ENCODE measurements at regions of chr4 and their contacts with region 1.

Region 1: DNA sequence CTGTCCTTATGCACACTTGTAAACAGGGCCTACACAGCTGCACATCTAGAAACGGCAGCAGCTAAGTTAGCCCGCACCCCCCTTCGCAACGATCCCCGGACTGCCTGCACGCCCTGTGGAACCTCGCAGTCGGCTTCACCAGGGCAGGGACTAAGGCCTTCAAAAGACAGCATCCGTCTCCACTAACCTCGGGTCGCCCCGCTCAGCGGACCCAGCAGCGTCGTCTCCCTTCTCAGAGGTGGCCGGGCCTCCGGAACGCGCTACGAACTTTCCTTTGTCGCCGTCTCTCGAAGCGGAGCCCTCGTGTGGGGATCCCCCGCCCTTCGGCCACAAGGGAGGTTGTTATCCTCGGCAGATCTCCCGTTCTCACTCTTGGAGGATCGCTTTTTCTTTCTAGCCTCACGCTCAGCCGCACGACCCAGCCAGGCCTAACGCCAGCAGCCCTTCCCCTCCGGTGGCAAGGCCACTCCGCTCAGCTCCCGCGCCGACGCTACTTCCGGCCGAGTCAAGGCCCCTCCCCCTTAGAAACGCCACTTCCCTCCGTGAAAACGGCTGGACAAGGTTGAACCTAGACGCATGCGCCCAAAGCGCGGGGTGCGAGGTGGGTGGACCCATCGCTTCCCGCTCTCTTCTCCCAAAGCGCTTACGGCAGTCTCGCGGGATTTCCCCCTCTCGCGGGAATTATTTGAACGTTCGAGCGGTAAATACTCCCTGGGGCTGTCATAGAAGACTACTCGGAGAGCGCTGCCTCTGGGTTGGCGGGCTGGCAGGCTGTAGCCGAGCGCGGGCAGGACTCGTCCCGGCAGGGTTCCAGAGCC is at the starts of genes DCAF16 and NCAPG:
- DNase-seq: peak; percentile 100
- H3K4me3 ChIP-seq: peak within 1 kb of the TSS; percentile 74 to 97 (median 86)
- H3K27ac ChIP-seq: peak within 1 kb of the TSS; percentile 68
- H3K4me1 ChIP-seq: peaks cover 45% of the 10 kb centered on the region
- H3K27me3 ChIP-seq: no peaks in the 10 kb centered on the region
- CTCF ChIP-seq: no peak
- POLR2A ChIP-seq: peak; percentile 94
- total RNA-seq, gene DCAF16: 29.0 and 35.0 TPM in 2 replicates
- total RNA-seq, gene NCAPG: 63.4 and 66.4 TPM in 2 replicates

Region 2: DNA sequence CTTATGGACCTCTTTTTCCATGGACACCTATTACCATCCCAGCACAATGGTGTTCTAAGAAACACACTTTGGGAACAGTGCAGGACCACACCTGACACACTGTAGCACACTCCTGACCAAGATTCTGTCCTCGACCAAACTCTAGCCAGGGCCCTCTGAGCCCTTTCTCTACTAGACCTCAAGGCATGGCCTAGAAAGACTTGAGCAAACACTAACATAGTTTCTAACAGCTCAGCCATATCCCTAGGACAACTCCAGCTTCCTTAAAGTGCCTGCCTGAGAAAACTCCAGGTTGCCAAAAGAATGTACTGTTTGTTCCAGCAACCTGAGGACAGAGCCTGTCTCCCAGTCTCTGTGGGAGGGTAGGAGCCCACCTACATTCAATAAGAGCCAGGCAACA is 346.9 kb before region 1 on chr4:
- CTCF ChIA-PET with region 1: no interaction called
- POLR2A ChIA-PET with region 1: no interaction called
- dilution Hi-C with region 1: no loop called
- intact Hi-C with region 1: no loop called
- DNase-seq: no peak
- H3K4me3 ChIP-seq: no peak overlapping the region
- H3K27ac ChIP-seq: no peak overlapping the region
- H3K4me1 ChIP-seq: no peaks in the 10 kb centered on the region
- H3K27me3 ChIP-seq: no peaks in the 10 kb centered on the region
- CTCF ChIP-seq: no peak
- POLR2A ChIP-seq: no peak

Region 3: GRCh38 chr4:17544205-17544604 is 266.3 kb before region 1 on chr4:
- CTCF ChIA-PET with region 1: interaction called, 50 read pairs
- POLR2A ChIA-PET with region 1: no interaction called
- dilution Hi-C with region 1: no loop called
- intact Hi-C with region 1: loop called (anchors 1 kb)
- DNase-seq: no peak
- H3K4me3 ChIP-seq: no peak overlapping the region
- H3K27ac ChIP-seq: no peak overlapping the region
- H3K4me1 ChIP-seq: peaks cover 4% of the 10 kb centered on the region
- H3K27me3 ChIP-seq: peaks cover 2 to 3% of the 10 kb centered on the region in 2 experiments
- CTCF ChIP-seq: no peak
- POLR2A ChIP-seq: no peak

Region 4: DNA sequence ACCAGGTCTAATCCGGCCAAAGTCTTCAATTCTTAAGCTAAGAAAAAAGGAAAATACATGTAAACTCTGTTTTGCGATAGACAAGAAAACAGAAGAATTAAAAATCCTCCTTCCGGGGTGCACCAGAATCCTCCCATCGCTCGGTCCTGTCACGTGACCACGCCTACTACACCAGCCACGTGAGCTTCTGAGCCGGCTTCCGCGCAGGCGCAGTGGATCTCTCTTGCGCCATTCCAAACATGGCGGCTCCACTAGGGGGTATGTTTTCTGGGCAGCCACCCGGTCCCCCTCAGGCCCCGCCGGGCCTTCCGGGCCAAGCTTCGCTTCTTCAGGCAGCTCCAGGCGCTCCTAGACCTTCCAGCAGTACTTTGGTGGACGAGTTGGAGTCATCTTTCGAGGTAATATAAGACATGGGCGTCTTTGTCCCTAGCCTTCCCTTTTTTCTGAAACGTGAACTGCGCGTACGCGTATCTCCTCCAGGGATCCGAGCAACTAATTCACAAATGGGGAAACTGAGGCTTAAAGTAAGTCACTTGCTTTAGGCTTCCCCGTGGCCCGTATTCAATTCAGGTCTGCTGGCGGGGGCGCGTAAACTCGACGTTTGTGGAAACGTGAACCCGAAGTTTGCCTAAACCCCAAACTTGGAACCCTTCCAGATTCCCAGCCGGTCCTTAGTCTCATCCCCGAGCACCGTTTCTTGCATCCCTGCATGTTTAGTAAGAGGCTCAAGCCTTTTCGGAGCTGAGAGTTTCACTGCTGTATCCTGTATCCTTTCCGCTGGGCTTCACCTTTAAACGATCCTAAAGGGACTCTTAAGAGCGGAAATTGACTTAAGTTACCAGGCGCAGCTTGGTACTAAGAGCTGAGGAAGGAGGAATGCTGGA is 195.8 kb before region 1 on chr4 and contains the start of gene MED28:
- CTCF ChIA-PET with region 1: interaction called, 3 read pairs
- POLR2A ChIA-PET with region 1: no interaction called
- dilution Hi-C with region 1: no loop called
- intact Hi-C with region 1: loop called (anchors 1 kb)
- DNase-seq: peak; percentile 91
- H3K4me3 ChIP-seq: peak within 1 kb of the TSS; percentile 72 to 100 (median 92)
- H3K27ac ChIP-seq: peak within 1 kb of the TSS; percentile 82
- H3K4me1 ChIP-seq: peaks cover 17% of the 10 kb centered on the region
- H3K27me3 ChIP-seq: no peaks in the 10 kb centered on the region
- CTCF ChIP-seq: peak in 1 of 2 donors; percentile 13
- POLR2A ChIP-seq: peak; percentile 90
- total RNA-seq, gene MED28: 41.2 and 49.1 TPM in 2 replicates

Region 5: DNA sequence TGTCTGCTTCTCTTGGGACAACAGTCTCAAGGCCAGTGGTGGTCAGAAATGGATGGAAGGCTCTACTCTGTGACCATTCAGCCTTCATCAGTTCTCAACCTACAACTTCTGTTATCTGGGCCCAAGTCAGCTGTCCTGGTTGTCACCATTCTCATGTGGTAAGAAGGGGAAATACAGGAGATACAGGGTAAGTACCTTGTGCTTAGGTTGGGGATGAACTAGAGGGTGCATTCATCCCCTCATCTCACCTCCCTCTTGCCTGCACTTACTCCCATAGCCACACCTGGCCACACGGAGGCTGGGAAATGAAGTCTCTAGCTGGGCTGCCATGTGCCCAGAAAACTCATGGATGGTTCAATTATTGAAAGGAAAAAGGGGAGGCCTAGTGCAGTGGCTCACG is 74.0 kb before region 1 on chr4:
- CTCF ChIA-PET with region 1: no interaction called
- POLR2A ChIA-PET with region 1: no interaction called
- dilution Hi-C with region 1: no loop called
- intact Hi-C with region 1: no loop called
- DNase-seq: no peak
- H3K4me3 ChIP-seq: no peak overlapping the region
- H3K27ac ChIP-seq: no peak overlapping the region
- H3K4me1 ChIP-seq: no peaks in the 10 kb centered on the region
- H3K27me3 ChIP-seq: no peaks in the 10 kb centered on the region
- CTCF ChIP-seq: no peak
- POLR2A ChIP-seq: no peak

Region 6: DNA sequence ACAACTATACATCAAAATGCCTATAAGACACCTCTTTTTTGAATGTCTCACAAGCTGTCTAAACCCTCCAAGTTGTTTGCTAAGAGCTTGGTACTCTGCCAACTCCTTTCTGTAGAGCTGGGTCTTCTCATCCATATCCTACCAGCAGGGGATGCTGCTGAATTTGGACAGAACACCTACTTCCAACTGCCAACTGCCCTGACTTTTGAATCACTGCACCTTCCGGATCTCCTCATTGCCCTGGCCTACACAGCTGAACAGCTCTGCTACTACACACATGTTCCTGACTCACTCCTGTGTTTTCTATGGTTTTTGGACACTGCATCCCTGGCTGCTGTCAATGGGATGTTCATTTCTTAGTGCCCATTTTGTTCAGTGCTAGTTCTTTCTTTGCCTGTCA is 47.7 kb before region 1 on chr4:
- CTCF ChIA-PET with region 1: no interaction called
- POLR2A ChIA-PET with region 1: no interaction called
- dilution Hi-C with region 1: no loop called
- intact Hi-C with region 1: no loop called
- DNase-seq: no peak
- H3K4me3 ChIP-seq: no peak overlapping the region
- H3K27ac ChIP-seq: no peak overlapping the region
- H3K4me1 ChIP-seq: no peaks in the 10 kb centered on the region
- H3K27me3 ChIP-seq: peaks cover 2 to 4% of the 10 kb centered on the region in 2 experiments
- CTCF ChIP-seq: peak in 1 of 2 donors; percentile 5
- POLR2A ChIP-seq: no peak

Region 7: DNA sequence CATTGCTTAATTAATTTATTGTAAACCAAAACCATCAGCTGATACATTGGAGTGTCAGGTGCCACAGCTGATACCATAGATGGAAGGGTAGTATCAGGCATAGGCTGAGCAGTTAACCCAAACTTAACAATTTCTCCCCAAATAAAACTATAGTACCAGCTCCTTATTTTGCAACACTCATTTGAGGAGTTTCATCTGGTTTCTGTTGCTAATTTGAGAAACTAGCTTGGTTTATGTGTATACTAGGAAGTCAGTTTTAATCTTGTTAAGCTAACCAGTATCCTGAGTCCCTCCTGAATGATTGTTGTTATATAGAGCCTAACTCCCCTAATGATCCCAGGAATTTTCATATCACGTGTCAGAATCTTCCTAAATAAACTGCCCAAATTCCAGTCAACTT is 12.7 kb before region 1 on chr4:
- CTCF ChIA-PET with region 1: interaction called, 12 read pairs
- POLR2A ChIA-PET with region 1: no interaction called
- dilution Hi-C with region 1: no loop called
- intact Hi-C with region 1: no loop called
- DNase-seq: no peak
- H3K4me3 ChIP-seq: no peak overlapping the region
- H3K27ac ChIP-seq: no peak overlapping the region
- H3K4me1 ChIP-seq: no peaks in the 10 kb centered on the region
- H3K27me3 ChIP-seq: no peaks in the 10 kb centered on the region
- CTCF ChIP-seq: no peak
- POLR2A ChIP-seq: no peak

Region 8: DNA sequence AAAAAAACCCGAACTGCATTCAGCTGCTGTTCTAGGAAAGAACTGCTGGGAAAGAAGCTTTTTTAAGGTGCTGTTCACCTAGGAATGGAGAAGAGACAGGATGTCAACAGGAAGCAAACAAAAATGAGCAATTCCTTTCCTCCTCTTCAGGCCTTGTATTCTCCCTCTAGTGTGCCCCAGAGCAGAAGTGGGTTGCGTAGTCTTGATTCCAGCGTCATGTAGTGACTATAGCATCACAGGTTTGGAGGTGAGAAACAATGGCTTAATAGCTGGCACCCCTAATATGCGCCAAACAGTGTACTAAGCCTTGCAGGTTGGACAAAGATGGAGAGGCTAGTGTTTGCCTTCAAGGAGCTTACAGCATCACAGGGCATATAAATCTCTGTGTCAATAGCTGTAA is 357.4 kb after region 1 on chr4:
- CTCF ChIA-PET with region 1: no interaction called
- POLR2A ChIA-PET with region 1: no interaction called
- dilution Hi-C with region 1: no loop called
- intact Hi-C with region 1: no loop called
- DNase-seq: no peak
- H3K4me3 ChIP-seq: no peak overlapping the region
- H3K27ac ChIP-seq: no peak overlapping the region
- H3K4me1 ChIP-seq: no peaks in the 10 kb centered on the region
- H3K27me3 ChIP-seq: no peaks in the 10 kb centered on the region
- CTCF ChIP-seq: no peak
- POLR2A ChIP-seq: no peak

Region 9: DNA sequence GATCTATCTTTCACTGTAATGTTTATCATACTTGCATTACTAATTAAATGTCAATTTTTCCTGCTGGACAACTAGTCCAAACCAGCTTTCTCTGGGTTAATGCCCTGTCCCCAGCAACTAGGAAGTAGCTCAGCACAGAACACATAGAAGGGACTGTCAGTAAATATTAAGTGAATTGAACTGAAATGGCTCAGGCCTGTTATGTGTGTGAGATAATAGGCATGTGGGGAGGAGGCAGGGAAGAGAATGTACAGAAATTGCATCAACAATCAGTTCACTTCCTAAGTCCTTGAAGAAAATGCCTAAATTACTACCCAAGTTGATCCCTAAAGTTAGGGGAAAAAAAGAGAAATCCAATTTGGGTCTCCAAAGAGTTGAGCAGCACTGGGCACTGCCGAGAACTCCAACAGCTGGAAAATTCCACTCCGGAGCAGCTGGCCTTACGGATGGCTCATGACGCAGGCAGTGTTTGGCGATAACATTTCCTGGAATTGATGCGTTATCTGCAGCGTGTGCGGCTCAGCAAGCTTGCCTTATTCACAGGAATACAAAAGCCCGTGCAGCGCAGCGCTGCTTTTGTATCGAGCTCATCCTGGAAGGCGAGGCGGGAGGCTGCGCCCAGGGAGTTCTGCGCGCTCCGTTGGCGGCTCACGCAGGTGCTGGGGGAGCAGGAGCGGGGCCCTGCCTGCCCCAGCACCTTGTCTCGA is 508.4 kb after region 1 on chr4:
- CTCF ChIA-PET with region 1: interaction called, 3 read pairs
- POLR2A ChIA-PET with region 1: no interaction called
- dilution Hi-C with region 1: no loop called
- intact Hi-C with region 1: loop called (anchors 5 kb)
- DNase-seq: peak; percentile 91
- H3K4me3 ChIP-seq: peak overlapping the region in 2 of 3 experiments; percentile 2 to 25
- H3K27ac ChIP-seq: peak overlapping the region; percentile 16
- H3K4me1 ChIP-seq: peaks cover 9% of the 10 kb centered on the region
- H3K27me3 ChIP-seq: no peaks in the 10 kb centered on the region
- CTCF ChIP-seq: no peak
- POLR2A ChIP-seq: no peak

Measured in endothelial cell of umbilical vein (primary cell).